CD14-positive monocyte (primary cell): ENCODE measurements at regions of chr10 and their contacts with region 1.

Region 1: DNA sequence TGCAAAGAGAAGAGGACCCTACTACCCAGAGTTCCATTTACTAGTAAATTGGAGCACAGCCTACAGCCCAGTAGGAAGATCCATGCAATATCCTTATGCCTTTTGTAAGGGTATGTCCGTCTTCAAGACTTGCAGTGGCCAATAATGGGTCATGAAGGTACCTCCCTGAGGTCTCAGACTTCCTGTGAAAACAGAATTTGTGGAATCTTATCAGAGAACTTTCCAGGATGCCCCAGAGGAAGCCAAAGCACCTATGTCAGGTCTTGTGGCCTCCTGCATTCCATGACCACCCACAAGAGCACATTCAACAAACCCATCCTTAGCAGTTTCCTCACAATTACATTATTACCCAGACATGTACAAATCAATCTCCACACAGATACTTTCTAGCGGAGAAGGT is 18.5 kb upstream of the PRXL2A start:
- DNase-seq: no peak
- H3K4me3 ChIP-seq: no peak overlapping the region
- H3K4me3 Mint-ChIP-seq: no peak overlapping the region
- H3K27ac ChIP-seq: no peak overlapping the region
- H3K27ac Mint-ChIP-seq: no peak overlapping the region
- H3K4me1 ChIP-seq: peaks cover 51 to 55% of the 10 kb centered on the region in 2 donors
- H3K4me1 Mint-ChIP-seq: peaks cover 55% of the 10 kb centered on the region
- H3K27me3 ChIP-seq: no peaks in the 10 kb centered on the region
- H3K27me3 Mint-ChIP-seq: peaks cover 0 to 3% (median 1%) of the 10 kb centered on the region in 3 donors
- CTCF ChIP-seq: no peak

Region 2: DNA sequence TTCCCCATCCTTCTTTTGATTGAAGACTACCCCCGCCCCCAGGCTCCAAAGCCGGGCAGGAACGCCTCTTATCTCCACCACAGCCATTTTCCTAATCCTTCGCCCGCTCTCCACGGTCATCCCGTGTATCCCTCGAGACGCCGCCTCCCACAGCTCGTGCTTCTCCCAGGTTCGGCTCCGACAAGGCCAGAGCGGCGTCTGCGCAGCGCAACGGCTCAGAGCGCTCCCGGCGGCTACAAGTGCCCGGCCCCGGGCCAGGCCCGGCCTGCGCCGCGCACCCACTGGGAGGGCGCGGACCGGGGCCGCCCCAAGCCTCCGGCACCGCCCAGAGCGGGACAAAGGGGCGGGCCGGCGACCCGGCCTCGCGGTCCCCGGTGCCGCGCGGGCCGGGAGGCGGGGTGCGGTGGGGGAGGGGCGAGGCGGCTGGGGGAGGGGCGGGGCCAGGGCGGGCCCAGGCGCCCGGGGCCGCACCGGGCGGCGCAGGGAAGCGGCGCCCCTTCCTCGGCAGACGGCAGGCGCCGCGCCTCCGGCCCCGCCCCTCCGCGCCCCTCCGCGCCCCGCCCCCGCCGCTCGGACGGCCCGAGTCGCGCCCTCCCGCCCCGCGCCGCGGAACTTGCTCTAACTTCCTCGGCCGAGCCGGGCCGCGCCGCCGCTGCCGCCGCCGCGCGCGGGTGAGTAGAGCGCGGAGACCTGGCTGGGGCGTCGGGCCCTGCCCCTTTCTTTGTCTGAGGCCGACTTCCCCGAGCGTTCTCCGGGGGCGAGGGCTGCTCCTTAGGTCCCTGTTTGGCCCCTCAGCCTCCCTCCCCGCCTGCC is 64.1 kb after region 1 on chr10 and contains the start of gene TSPAN14:
- intact Hi-C with region 1: loop called in 1 of 2 experiments (anchors 5 kb)
- DNase-seq: peak; percentile 62 to 73 (median 72)
- H3K4me3 ChIP-seq: peak within 1 kb of the TSS; percentile 63 to 96 (median 74)
- H3K4me3 Mint-ChIP-seq: peak within 1 kb of the TSS; percentile 99
- H3K27ac ChIP-seq: peak within 1 kb of the TSS; percentile 81 to 92
- H3K27ac Mint-ChIP-seq: peak within 1 kb of the TSS; percentile 92 to 99 (median 94)
- H3K4me1 ChIP-seq: peaks cover 66 to 77% of the 10 kb centered on the region in 2 donors
- H3K4me1 Mint-ChIP-seq: peaks cover 49% of the 10 kb centered on the region
- H3K27me3 ChIP-seq: no peaks in the 10 kb centered on the region
- H3K27me3 Mint-ChIP-seq: peaks cover 0 to 2% (median 2%) of the 10 kb centered on the region in 3 donors
- CTCF ChIP-seq: no peak
- polyA plus RNA-seq, gene TSPAN14: 123 to 160 (median 146) TPM

Region 3: GRCh38 chr10:80509403-80510161 is 119.8 kb after region 1 on chr10:
- intact Hi-C with region 1: loop called in 1 of 2 experiments (anchors 5 kb)
- DNase-seq: peak in 1 of 3 donors; percentile 49
- H3K4me3 ChIP-seq: no peak overlapping the region
- H3K4me3 Mint-ChIP-seq: no peak overlapping the region
- H3K27ac ChIP-seq: peak overlapping the region in 1 of 2 donors; percentile 52
- H3K27ac Mint-ChIP-seq: peak overlapping the region; percentile 59 to 85 (median 76)
- H3K4me1 ChIP-seq: peaks cover 13 to 14% of the 10 kb centered on the region in 2 donors
- H3K4me1 Mint-ChIP-seq: peaks cover 28% of the 10 kb centered on the region
- H3K27me3 ChIP-seq: no peaks in the 10 kb centered on the region
- H3K27me3 Mint-ChIP-seq: no peaks in the 10 kb centered on the region
- CTCF ChIP-seq: no peak